PC-9 (cell line): ENCODE measurements at regions of chr19 and their contacts with region 1.

Region 1: GRCh38 chr19:41363753-41364523 is at the start of gene B9D2:
- DNase-seq: peak; percentile 93 to 97
- H3K4me3 ChIP-seq: peak within 1 kb of the TSS; percentile 78
- H3K27ac ChIP-seq: peak within 1 kb of the TSS; percentile 88
- H3K4me1 ChIP-seq: peaks cover 21% of the 10 kb centered on the region
- H3K27me3 ChIP-seq: no peaks in the 10 kb centered on the region
- CTCF ChIP-seq: no peak
- total RNA-seq, gene B9D2: 8.0 and 10.8 TPM in 2 replicates

Region 2: DNA sequence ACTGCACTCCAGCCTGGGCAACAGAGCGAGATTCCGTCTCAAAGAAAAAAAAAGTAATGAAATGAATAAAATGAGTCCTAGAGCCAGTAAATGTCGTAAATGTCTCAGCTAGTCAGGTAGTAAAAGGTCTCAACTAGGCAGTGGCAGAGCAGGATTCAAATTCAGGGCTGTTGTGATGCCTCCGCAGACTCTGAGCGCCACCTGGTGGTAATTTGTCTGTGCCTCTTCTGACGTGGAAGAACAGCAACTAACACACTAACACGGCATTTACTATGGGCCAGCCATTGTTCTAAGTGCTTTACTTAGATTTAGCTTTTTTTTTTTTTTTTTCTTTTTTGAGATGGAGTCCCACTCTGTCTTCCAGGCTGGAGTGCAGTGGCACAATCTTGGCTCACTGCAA is 219.5 kb before region 1 on chr19:
- CTCF ChIA-PET with region 1: no interaction called
- POLR2A ChIA-PET with region 1: no interaction called
- intact Hi-C with region 1: no loop called
- DNase-seq: peak; percentile 64 to 75
- H3K4me3 ChIP-seq: no peak overlapping the region
- H3K27ac ChIP-seq: no peak overlapping the region
- H3K4me1 ChIP-seq: no peaks in the 10 kb centered on the region
- H3K27me3 ChIP-seq: no peaks in the 10 kb centered on the region
- CTCF ChIP-seq: peak; percentile 90

Region 3: DNA sequence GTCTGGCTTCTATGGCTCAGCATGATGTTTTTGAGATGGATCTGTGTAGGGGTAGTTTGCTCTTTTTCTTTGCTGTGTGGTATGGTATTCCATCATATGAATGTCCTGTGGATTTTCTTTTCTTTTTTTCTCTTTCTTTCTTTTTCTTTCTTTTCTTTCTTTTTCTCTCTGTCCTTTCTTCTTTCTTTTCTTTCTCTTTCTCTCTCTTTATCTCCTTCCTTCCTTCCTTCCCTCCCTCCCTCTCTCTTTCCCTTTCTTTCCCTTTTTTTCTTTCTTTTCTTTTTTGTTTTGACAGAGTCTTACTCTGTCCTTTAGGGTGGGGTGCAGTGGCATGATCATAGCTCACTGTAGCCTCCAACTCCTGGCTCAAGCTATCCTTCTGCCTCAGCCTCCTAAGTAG is 108.8 kb before region 1 on chr19:
- CTCF ChIA-PET with region 1: no interaction called
- POLR2A ChIA-PET with region 1: no interaction called
- intact Hi-C with region 1: no loop called
- DNase-seq: no peak
- H3K4me3 ChIP-seq: no peak overlapping the region
- H3K27ac ChIP-seq: no peak overlapping the region
- H3K4me1 ChIP-seq: no peaks in the 10 kb centered on the region
- H3K27me3 ChIP-seq: no peaks in the 10 kb centered on the region
- CTCF ChIP-seq: no peak

Region 4: GRCh38 chr19:41298348-41298964 is 65.5 kb before region 1 on chr19:
- CTCF ChIA-PET with region 1: no interaction called
- POLR2A ChIA-PET with region 1: no interaction called
- intact Hi-C with region 1: no loop called
- DNase-seq: no peak
- H3K4me3 ChIP-seq: no peak overlapping the region
- H3K27ac ChIP-seq: no peak overlapping the region
- H3K4me1 ChIP-seq: no peaks in the 10 kb centered on the region
- H3K27me3 ChIP-seq: no peaks in the 10 kb centered on the region
- CTCF ChIP-seq: no peak

Region 5: GRCh38 chr19:41397086-41398049 is 33.4 kb after region 1 on chr19 and contains the starts of genes BCKDHA and EXOSC5:
- CTCF ChIA-PET with region 1: no interaction called
- POLR2A ChIA-PET with region 1: interaction called, 25 read pairs
- intact Hi-C with region 1: no loop called
- DNase-seq: peak; percentile 98 to 99
- H3K4me3 ChIP-seq: peak within 1 kb of the TSS; percentile 100
- H3K27ac ChIP-seq: peak within 1 kb of the TSS; percentile 79
- H3K4me1 ChIP-seq: peaks cover 19% of the 10 kb centered on the region
- H3K27me3 ChIP-seq: no peaks in the 10 kb centered on the region
- CTCF ChIP-seq: no peak
- total RNA-seq, gene BCKDHA: 26.3 and 28.4 TPM in 2 replicates
- total RNA-seq, gene EXOSC5: 37.7 and 43.7 TPM in 2 replicates

Region 6: GRCh38 chr19:41548954-41549688 is 185.2 kb after region 1 on chr19:
- CTCF ChIA-PET with region 1: no interaction called
- POLR2A ChIA-PET with region 1: interaction called, 17 read pairs
- intact Hi-C with region 1: no loop called
- DNase-seq: no peak
- H3K4me3 ChIP-seq: no peak overlapping the region
- H3K27ac ChIP-seq: no peak overlapping the region
- H3K4me1 ChIP-seq: no peaks in the 10 kb centered on the region
- H3K27me3 ChIP-seq: peaks cover 98% of the 10 kb centered on the region
- CTCF ChIP-seq: no peak

Region 7: GRCh38 chr19:41597600-41598041 is 233.7 kb after region 1 on chr19:
- CTCF ChIA-PET with region 1: no interaction called
- POLR2A ChIA-PET with region 1: no interaction called
- intact Hi-C with region 1: no loop called
- DNase-seq: peak; percentile 51 to 60
- H3K4me3 ChIP-seq: no peak overlapping the region
- H3K27ac ChIP-seq: no peak overlapping the region
- H3K4me1 ChIP-seq: no peaks in the 10 kb centered on the region
- H3K27me3 ChIP-seq: peaks cover 21% of the 10 kb centered on the region
- CTCF ChIP-seq: peak; percentile 97